Activated T-helper 1 cell treated with anti-CD3 and anti-CD28 coated beads, Interleukin-12 subunit alpha, Interleukin-12 subunit beta, Interleukin-2, Interleukin-4 antibody, amounts not matched to agents 30 ng/mL and 10 ng/mL and 1 ng/mL, durations not matched to agents 14 hours and 24 hours and 36 hours (primary cell): ENCODE measurements at regions of chr16 and their contacts with region 1.

Region 1: DNA sequence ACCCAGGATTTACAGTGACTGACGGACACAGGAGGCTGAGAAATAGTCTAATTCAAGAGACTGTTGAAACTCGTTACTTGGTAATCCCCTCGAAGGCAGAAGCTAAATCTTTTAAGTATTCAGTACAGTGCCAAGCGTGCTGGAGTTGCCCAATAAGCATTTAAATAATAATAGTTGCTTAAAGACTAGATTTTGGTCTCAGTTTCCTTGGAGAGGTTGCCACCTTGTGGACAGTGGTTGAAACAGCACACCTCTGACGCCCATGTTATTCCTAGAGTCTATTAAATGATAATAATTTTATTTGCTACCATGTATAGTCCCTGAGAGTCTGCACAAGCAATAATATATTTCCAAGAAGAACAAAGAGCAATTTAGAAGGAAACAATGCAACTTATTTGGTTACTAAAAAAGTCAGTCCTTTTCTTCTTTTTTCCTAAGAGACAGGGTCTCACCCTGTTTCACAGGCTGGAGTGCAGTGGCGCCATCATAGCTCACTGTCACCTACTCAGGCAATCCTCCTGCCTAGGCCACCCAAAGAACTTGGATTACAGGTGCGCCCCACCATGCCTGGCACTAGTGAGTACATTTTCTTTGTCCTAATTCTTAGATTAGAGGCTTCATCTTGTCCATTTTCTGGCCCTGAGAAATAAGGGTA is 138.0 kb upstream of the NUDT7 start:
- DNase-seq: peak; percentile 2
- H3K4me3 Mint-ChIP-seq: no peak overlapping the region
- H3K27ac Mint-ChIP-seq: no peak overlapping the region
- H3K4me1 Mint-ChIP-seq: peaks cover 7% of the 10 kb centered on the region
- H3K27me3 Mint-ChIP-seq: peaks cover 8% of the 10 kb centered on the region

Region 2: GRCh38 chr16:77376358-77376757 is 208.0 kb before region 1 on chr16:
- intact Hi-C with region 1: loop called (anchors 2 kb)
- DNase-seq: no peak
- H3K4me3 Mint-ChIP-seq: no peak overlapping the region
- H3K27ac Mint-ChIP-seq: no peak overlapping the region
- H3K4me1 Mint-ChIP-seq: no peaks in the 10 kb centered on the region
- H3K27me3 Mint-ChIP-seq: peaks cover 3% of the 10 kb centered on the region

Region 3: DNA sequence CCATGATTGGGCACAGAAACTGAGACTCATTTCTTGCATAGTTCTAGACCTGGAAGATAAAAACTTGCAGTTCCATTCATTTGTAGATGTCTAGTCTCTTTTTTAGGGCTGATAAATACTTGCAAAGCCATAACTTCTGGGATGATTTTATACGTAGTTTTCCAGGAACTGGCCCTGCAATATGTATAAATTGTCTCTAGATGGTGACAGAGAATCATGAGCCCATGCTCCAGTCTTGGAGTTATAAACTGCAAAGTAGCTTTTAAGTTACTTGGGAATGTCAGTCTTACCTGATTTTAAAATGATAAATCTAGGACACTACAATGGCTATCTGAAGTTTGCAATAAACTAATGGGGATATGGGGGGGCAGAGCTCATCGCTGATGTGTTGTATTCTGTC is 146.5 kb before region 1 on chr16:
- intact Hi-C with region 1: loop called (anchors 10 kb)
- DNase-seq: no peak
- H3K4me3 Mint-ChIP-seq: no peak overlapping the region
- H3K27ac Mint-ChIP-seq: no peak overlapping the region
- H3K4me1 Mint-ChIP-seq: no peaks in the 10 kb centered on the region
- H3K27me3 Mint-ChIP-seq: peaks cover 29% of the 10 kb centered on the region